AG04449 (cell line): ENCODE measurements at regions of chr11 and their contacts with region 1.

Region 1: GRCh38 chr11:119196833-119197483 is 9.2 kb upstream of the CBL start:
- DNase-seq: peak; percentile 52
- H3K4me3 ChIP-seq: no peak overlapping the region
- CTCF ChIP-seq: peak; percentile 69

Region 2: DNA sequence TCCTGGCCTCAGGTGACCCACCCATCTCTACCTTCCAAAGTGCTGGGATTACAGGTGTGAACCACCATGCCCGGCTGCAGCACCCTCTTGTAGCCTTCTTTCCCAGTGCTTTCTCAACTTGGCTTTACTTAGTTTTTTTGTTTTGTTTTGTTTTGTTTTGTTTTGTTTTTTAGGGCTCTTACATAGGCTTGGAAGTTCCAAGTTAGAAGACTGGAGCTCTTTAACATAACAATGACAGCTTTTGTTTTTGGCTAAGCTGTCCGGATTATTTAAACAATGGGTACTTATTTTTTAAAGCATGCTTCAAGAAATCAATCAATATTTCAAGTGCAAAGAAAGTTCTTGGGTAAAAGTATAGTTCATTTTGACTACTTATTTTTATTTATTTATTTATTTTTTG is 734.8 kb before region 1 on chr11:
- CTCF ChIA-PET with region 1: no interaction called
- POLR2A ChIA-PET with region 1: no interaction called
- DNase-seq: no peak
- H3K4me3 ChIP-seq: no peak overlapping the region
- CTCF ChIP-seq: no peak

Region 3: GRCh38 chr11:119095066-119095880 is 101.7 kb before region 1 on chr11:
- CTCF ChIA-PET with region 1: interaction called, 31 read pairs
- POLR2A ChIA-PET with region 1: no interaction called
- DNase-seq: peak; percentile 97
- H3K4me3 ChIP-seq: peak overlapping the region; percentile 69
- CTCF ChIP-seq: no peak

Region 4: DNA sequence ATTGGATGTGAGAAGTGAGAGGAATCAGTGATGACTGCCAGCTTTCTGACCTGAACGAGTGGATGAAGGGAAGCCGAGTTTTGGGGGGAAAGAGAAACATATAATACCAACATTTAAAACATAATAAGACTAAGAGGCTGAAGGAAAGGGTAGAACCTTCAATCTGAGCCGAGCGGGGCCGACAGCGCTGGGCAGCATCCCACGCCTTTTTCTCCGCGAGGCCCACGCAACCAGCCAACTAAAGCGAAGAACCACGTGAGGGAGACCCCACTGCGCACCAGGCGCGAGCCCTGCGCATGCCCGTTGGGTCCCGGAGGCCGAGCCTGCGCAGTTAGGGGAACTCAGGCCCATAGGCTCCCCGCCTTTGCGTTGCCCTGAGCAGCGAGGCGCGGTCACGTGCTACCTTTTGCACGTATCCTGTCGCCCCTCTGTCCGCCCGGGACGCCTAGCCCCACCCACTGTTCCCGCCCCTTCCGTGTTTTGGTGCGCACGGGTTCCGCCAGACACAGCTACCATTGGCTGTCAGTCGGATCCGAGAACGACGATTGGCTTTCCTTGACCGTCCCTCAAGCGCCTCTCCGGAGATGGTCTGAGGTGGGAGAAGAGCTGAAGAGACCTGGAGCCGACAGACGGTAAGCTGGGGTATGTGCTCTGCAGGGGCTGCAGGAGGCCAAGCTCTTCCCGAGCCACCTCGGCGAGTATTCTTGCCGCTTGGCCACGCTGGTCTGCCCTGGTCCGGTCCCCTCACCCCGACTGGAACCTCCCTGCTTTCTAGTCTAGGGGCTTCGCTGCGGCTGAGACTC is 75.7 kb before region 1 on chr11 and contains the start of gene HINFP:
- CTCF ChIA-PET with region 1: interaction called, 11 read pairs
- POLR2A ChIA-PET with region 1: no interaction called
- DNase-seq: peak; percentile 88
- H3K4me3 ChIP-seq: peak within 1 kb of the TSS; percentile 100
- CTCF ChIP-seq: no peak

Region 5: DNA sequence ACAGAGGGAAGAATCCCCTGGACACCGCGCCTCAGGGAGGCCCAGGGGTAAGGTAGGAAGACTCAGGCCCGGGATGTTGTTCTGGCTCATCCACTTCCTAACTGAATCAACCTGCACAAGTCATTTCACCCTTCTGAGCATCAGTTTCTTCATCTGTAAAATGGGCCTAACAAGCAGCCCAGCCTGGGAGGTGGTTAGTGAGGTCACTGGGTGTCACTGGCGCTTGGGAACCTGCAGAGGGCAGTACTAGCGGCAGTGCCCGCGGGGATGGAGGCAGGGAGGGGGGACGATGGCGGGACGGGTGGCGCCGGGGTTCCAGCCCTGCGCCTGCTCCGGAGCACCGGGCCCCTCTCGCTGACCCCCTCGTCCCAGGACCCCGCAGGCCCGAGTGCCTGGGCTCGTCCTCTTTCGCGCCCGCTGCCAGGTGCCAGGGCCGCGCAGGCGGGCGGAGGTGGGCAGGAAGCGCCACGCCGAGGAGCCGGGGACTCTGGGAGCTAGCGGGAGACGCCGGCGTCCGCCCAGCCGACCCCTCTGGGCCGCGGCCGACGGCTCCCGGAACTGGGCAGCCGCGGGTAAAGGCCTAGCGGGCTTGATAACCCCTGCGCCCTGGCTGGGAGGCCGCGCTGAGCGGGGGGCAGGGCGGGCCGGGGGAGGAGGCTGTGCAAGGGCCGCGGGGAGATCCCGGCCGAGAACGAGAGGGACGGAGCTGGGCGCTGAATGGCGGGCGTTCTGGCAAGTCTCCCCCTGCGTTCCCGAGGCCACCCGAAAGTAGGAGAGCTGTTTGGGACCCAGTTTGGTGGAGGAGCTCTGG is 28.3 kb before region 1 on chr11 and contains the start of gene NLRX1:
- CTCF ChIA-PET with region 1: interaction called, 52 read pairs
- POLR2A ChIA-PET with region 1: interaction called, 3 read pairs
- DNase-seq: peak; percentile 19
- H3K4me3 ChIP-seq: peak within 1 kb of the TSS; percentile 70
- CTCF ChIP-seq: peak; percentile 93

Region 6: GRCh38 chr11:119181677-119182412 is 15.1 kb before region 1 on chr11:
- CTCF ChIA-PET with region 1: interaction called, 55 read pairs
- POLR2A ChIA-PET with region 1: no interaction called
- DNase-seq: no peak
- H3K4me3 ChIP-seq: no peak overlapping the region
- CTCF ChIP-seq: no peak

Region 7: DNA sequence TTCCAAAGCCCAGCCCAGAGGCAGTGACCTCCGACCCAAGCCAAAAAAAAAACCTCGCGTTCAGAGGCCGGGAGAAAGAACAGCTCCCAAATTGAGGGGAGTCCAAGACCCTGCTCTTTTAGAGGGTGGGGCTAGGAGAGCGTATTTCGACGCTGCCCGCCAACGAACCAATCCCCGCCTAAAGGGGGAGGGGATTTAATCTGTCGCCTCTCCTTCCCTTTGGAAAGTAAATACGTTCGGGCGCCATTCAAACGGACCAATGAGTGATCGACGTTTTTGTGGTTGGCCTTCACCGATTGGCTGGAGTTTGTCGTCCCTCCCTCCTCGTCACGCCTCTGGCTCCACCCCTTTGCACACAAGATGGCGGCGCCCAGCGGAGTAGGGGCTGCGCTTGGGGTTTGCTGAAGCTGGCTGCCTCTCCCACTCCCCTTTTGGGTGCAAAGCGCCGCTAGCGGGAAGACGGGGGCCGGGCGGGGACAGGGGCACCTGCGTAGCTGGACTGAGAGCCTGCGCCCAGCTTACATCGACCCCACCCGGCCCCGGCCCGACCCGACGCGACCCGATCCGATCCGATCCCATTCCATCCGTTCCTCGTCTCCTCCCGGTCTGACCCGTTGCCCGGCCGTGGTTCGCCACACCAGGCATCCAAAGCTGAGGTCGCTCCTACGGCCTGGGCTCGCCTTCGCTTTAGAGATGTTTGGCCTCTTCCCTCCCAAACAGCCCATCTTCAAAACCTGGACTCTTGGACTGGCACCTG is 137.4 kb after region 1 on chr11 and contains the start of gene RNF26:
- CTCF ChIA-PET with region 1: interaction called, 20 read pairs
- POLR2A ChIA-PET with region 1: no interaction called
- DNase-seq: peak; percentile 88
- H3K4me3 ChIP-seq: peak within 1 kb of the TSS; percentile 97
- CTCF ChIP-seq: no peak